ENCODE measurements at regions of chr17 and their contacts with region 1.

Region 1: GRCh38 chr17:233473-233941 is 52.1 kb upstream of the DOC2B start:
- DNase-seq: no peak
- H3K4me3 ChIP-seq: no peak overlapping the region
- CTCF ChIP-seq: no peak

Region 2: GRCh38 chr17:164303-165235 is 68.9 kb before region 1 on chr17:
- in situ Hi-C with region 1: no loop called
- DNase-seq: peak; percentile 4
- H3K4me3 ChIP-seq: no peak overlapping the region
- CTCF ChIP-seq: peak; percentile 65

Region 3: GRCh38 chr17:266701-267667 is 33.5 kb after region 1 on chr17:
- in situ Hi-C with region 1: loop called (anchors 5 kb)
- DNase-seq: no peak
- H3K4me3 ChIP-seq: no peak overlapping the region
- CTCF ChIP-seq: no peak

Region 4: DNA sequence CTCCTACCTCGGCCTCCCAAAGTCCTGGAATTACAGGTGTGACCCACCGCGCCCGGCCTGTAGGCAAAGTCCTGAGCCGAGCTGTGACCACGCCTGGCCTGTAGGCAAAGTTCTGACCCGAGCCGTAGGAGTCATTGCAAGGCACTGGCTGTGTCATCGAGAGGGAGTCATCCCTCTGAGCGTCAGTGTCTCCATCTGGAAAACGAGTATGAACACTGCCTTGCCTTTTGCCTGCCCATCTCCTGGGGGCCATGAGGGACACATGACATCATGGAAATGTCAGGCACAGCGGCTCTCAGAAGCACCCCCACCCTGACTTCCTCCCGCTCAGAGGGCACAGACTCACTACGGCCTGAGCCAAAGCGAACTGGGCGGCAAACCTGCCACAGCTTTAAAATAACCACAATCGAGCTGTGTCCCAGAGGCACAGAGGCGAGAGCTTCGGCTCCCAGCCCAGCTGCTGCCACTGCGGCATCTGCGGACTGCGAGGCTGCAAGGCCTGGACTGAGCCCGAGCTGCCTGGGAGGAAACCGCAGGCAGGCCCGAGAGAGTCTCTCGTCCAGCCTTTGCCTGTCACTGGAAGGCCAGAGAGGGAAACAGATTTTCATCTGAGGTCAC is 68.3 kb after region 1 on chr17:
- in situ Hi-C with region 1: no loop called
- DNase-seq: no peak
- H3K4me3 ChIP-seq: no peak overlapping the region
- CTCF ChIP-seq: no peak

Measured in astrocyte of the cerebellum (primary cell).